ENCODE measurements at regions of chr1 and their contacts with region 1.

Region 1: DNA sequence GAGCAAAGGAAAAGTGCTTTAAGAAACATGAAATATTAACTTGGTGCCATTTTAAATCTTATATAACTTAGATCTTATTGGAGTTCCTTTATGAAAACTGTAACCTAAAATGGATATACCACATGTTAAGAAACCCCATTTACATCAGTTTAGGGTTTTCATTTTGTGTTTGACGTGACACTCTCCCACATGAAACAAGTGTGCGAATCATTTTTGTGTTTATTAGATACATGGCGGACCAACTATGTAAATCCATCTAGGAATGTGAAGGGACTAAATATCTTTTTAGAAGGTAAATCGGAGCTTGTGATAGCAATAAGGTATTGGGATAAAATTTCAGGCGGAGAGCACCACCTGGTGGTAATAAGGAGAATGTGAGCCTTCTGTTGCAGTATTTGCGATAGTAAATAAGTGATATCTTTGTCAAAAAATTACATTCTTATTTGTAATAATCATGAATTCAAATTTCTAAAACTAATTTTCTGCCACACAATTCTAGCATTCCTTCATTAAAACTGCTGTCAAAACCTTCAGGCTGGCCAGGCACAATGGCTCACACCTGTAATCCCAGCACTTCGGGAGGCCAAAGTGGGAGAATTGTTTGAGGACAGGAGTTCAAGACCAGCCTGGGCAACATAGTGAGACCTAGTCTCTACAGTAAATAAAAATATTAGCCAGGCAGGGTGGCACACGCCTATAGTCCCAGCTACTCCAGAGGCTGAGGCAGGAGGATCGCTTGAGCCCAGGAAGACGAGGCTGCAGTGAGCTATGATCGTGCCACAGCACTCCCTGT is 31.3 kb downstream of the SMAP2 start:
- DNase-seq: no peak
- ATAC-seq: no peak
- H3K4me3 Mint-ChIP-seq: peak overlapping the region; percentile 82
- H3K27ac Mint-ChIP-seq: peak overlapping the region; percentile 92
- H3K4me1 Mint-ChIP-seq: peaks cover 39% of the 10 kb centered on the region
- H3K27me3 Mint-ChIP-seq: no peaks in the 10 kb centered on the region

Region 2: GRCh38 chr1:40385437-40386358 is 19.2 kb before region 1 on chr1:
- POLR2A ChIA-PET with region 1: interaction called, 54 read pairs
- DNase-seq: no peak
- ATAC-seq: peak; percentile 55
- H3K4me3 Mint-ChIP-seq: peak overlapping the region; percentile 85
- H3K27ac Mint-ChIP-seq: peak overlapping the region; percentile 98
- H3K4me1 Mint-ChIP-seq: peaks cover 84% of the 10 kb centered on the region
- H3K27me3 Mint-ChIP-seq: no peaks in the 10 kb centered on the region

Region 3: DNA sequence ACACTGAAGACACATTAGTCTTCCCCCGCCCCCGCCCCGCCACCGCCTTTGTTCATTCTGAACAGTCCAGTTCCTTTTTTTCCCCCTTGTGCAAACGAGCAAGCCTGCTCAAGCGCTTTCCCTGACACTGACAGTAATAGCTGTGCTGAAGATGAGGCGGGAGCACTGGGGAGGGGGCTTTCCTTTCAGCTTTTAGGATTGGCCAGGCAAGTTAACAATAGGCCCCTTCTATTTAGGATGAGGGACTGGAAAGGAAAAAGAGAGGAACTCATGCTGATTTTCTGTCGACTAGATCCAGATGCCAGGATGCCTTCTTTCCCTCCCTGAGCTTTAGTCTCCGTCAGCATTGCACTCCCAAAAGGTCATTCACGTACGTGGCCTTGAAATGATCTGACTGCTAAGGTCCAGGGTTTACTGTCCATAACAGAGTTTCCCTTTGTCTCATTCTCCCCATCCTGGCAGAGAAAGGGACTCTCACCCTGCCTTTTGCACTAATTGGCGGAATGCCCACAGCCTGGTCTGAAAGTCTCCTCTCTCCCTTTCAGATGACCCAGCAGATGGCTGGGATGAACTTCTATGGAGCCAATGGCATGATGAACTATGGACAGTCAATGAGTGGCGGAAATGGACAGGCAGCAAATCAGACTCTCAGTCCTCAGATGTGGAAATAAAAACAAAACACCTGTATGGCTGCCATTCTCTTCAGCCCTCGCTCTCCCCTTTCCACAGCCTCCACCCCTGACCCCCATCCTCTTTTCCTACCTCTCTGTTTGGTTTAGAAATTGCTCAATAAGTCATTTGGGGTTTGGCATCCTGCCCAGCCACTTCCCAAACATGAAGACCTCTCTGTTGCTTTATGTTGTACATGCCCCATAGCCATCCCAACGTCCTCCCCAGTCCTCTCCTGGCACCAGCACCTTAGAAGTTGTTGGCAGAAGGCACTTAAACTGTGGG is 16.8 kb after region 1 on chr1:
- POLR2A ChIA-PET with region 1: no interaction called
- DNase-seq: no peak
- ATAC-seq: no peak
- H3K4me3 Mint-ChIP-seq: no peak overlapping the region
- H3K27ac Mint-ChIP-seq: no peak overlapping the region
- H3K4me1 Mint-ChIP-seq: peaks cover 9% of the 10 kb centered on the region
- H3K27me3 Mint-ChIP-seq: no peaks in the 10 kb centered on the region

Region 4: DNA sequence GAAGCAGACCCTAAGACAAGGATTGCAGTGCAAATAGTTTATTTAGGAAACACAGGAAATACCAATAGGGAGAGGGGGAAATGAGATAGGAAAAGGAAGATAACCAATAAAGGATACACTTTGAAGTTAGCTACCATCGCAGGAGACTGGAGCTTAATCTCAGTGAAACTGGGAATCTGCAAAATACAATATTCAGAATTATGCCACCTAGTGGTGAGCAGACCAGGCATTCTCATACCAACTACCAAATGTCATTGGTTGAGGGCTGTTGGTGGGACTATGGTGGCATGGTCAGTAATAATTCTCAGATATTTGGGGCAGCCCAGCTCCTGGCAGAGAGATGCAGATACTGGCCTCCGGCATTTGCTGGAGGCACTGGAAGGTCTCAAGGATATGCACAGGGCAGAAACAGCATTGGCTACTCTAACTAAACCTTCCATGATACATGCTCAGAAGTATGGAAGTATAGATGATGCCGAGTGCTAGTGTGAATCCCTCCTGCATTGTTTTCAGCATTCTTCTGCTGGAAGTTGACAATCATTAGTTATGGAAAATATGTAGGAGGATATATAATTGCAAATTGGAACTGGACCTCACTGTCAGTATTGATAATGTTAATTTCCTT is 33.6 kb after region 1 on chr1:
- POLR2A ChIA-PET with region 1: no interaction called
- DNase-seq: no peak
- ATAC-seq: no peak
- H3K4me3 Mint-ChIP-seq: no peak overlapping the region
- H3K27ac Mint-ChIP-seq: no peak overlapping the region
- H3K4me1 Mint-ChIP-seq: peaks cover 1% of the 10 kb centered on the region
- H3K27me3 Mint-ChIP-seq: no peaks in the 10 kb centered on the region